ENCODE measurements at regions of chr5 and their contacts with region 1.

Region 1: GRCh38 chr5:88203981-88204750 is 64.5 kb downstream of the TMEM161B start:
- DNase-seq: peak; percentile 12 to 86 (median 54)
- ATAC-seq: peak; percentile 94
- H3K4me3 ChIP-seq: peak overlapping the region in 1 of 2 experiments; percentile 4
- H3K4me3 Mint-ChIP-seq: peak overlapping the region; percentile 60
- H3K27ac ChIP-seq: peak overlapping the region; percentile 26 to 70
- H3K27ac Mint-ChIP-seq: peak overlapping the region; percentile 88
- H3K4me1 ChIP-seq: no peaks in the 10 kb centered on the region
- H3K4me1 Mint-ChIP-seq: peaks cover 14% of the 10 kb centered on the region
- H3K27me3 ChIP-seq: no peaks in the 10 kb centered on the region
- H3K27me3 Mint-ChIP-seq: no peaks in the 10 kb centered on the region
- CTCF ChIP-seq: no peak

Region 2: DNA sequence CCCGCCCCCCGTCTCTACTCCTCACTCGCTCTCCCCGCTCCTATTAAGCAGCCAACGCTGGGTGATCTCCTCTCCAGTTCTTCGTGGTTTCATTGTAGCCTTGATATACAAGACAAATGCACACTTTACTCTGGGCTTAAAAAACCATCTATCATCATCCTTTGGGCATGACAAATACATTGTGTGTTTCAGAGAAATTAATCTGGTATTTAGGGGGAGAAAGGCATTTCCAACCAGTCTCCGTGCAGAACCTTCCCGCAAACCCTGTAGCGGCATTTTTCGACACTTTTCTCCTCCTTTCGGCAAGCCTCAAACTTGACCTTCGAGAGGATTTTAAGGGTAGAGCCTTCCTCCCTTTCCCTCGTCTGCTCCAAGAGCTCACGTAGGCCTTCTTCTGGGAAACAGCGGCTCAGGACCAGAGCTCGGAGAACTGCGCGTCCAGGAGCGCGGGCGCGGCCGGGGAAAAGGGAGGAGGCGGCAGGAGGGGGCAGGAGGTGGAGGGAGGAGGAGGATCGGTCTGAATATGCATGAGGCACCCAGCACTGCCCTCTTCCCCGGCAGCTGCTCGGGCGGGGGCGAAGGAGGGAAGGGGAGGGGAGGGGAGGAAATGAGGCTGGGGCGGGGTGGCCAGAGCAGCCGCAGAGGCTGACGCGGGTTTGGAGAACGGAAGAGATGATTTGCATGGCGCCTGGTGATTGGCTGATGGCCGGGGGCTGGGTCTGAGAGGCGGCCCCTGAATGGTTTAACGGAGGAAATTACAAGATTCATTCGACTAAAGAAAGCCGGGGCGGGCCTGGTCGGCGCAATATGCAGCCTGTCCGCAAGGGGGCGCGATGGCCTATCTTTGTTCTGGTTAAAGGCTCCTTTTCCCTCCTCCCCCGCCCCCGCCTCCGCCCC is 63.1 kb before region 1 on chr5:
- CTCF ChIA-PET with region 1: no interaction called
- POLR2A ChIA-PET with region 1: no interaction called
- intact Hi-C with region 1: loop called in 1 of 2 experiments (anchors 5 kb)
- DNase-seq: peak; percentile 62 to 93 (median 80)
- ATAC-seq: peak; percentile 90
- H3K4me3 ChIP-seq: peak overlapping the region; percentile 42 to 53
- H3K4me3 Mint-ChIP-seq: no peak overlapping the region
- H3K27ac ChIP-seq: no peak overlapping the region
- H3K27ac Mint-ChIP-seq: no peak overlapping the region
- H3K4me1 ChIP-seq: peaks cover 39% of the 10 kb centered on the region
- H3K4me1 Mint-ChIP-seq: peaks cover 18% of the 10 kb centered on the region
- H3K27me3 ChIP-seq: peaks cover 19 to 50% of the 10 kb centered on the region in 2 experiments
- H3K27me3 Mint-ChIP-seq: peaks cover 39% of the 10 kb centered on the region
- CTCF ChIP-seq: peak; percentile 46